ENCODE measurements at regions of chr10 and their contacts with region 1.

Region 1: GRCh38 chr10:33139181-33139646 is 181.2 kb upstream of the ITGB1 start:
- DNase-seq: peak; percentile 42 to 94 (median 76)
- ATAC-seq: peak; percentile 75 to 92 (median 80)
- H3K4me3 ChIP-seq: peak overlapping the region; percentile 23 to 49
- H3K4me3 Mint-ChIP-seq: peak overlapping the region; percentile 38 to 58 (median 48)
- H3K27ac ChIP-seq: peak overlapping the region; percentile 89
- H3K27ac Mint-ChIP-seq: peak overlapping the region; percentile 94
- H3K4me1 ChIP-seq: peaks cover 19 to 93% of the 10 kb centered on the region in 2 experiments
- H3K4me1 Mint-ChIP-seq: peaks cover 64 to 91% (median 89%) of the 10 kb centered on the region in 3 donors
- H3K27me3 ChIP-seq: no peaks in the 10 kb centered on the region
- H3K27me3 Mint-ChIP-seq: no peaks in the 10 kb centered on the region

Region 2: DNA sequence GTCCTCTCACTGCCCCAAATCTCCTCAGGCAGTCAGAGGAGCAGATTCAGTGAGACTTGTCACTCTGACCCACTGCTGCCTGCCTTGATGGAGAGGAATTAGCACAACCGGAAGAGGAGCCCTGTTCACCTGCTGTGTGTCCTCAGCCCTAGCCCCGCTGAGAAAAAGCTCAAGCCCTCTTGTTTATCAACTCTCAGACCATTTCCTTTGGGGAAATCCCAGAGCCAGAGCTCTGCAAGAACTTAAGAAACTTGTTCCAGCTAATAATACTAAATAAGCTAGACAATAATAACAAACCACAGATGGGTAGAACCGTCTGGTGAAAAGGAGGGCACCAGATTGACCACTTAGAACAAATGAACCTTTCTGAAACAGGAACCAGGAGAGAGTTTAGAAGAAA is 143.5 kb before region 1 on chr10:
- CTCF ChIA-PET with region 1: no interaction called
- POLR2A ChIA-PET with region 1: no interaction called
- DNase-seq: no peak
- ATAC-seq: peak in 1 of 4 experiments; percentile 29
- H3K4me3 ChIP-seq: no peak overlapping the region
- H3K4me3 Mint-ChIP-seq: no peak overlapping the region
- H3K27ac ChIP-seq: no peak overlapping the region
- H3K27ac Mint-ChIP-seq: no peak overlapping the region
- H3K4me1 ChIP-seq: peaks cover 0 to 6% of the 10 kb centered on the region in 2 experiments
- H3K4me1 Mint-ChIP-seq: peaks cover 0 to 14% (median 5%) of the 10 kb centered on the region in 3 donors
- H3K27me3 ChIP-seq: no peaks in the 10 kb centered on the region
- H3K27me3 Mint-ChIP-seq: peaks cover 0 to 5% of the 10 kb centered on the region in 2 donors

Region 3: GRCh38 chr10:33115738-33116719 is 23.2 kb before region 1 on chr10:
- CTCF ChIA-PET with region 1: interaction called in 1 of 2 experiments, 9 read pairs
- POLR2A ChIA-PET with region 1: interaction called in 1 of 2 experiments, 12 read pairs
- DNase-seq: peak in 4 of 35 experiments; percentile 29 to 70 (median 31)
- ATAC-seq: peak; percentile 24 to 48 (median 38)
- H3K4me3 ChIP-seq: peak overlapping the region in 1 of 2 donors; percentile 28
- H3K4me3 Mint-ChIP-seq: peak overlapping the region; percentile 45 to 76 (median 64)
- H3K27ac ChIP-seq: peak overlapping the region; percentile 90
- H3K27ac Mint-ChIP-seq: peak overlapping the region; percentile 93 to 100
- H3K4me1 ChIP-seq: peaks cover 14 to 68% of the 10 kb centered on the region in 2 experiments
- H3K4me1 Mint-ChIP-seq: peaks cover 56 to 96% (median 89%) of the 10 kb centered on the region in 3 donors
- H3K27me3 ChIP-seq: no peaks in the 10 kb centered on the region
- H3K27me3 Mint-ChIP-seq: no peaks in the 10 kb centered on the region

Region 4: GRCh38 chr10:33125522-33126517 is 13.4 kb before region 1 on chr10:
- CTCF ChIA-PET with region 1: interaction called, 4 to 12 read pairs
- POLR2A ChIA-PET with region 1: interaction called, 5 to 10 read pairs
- DNase-seq: peak in 27 of 35 experiments; percentile 15 to 74 (median 36)
- ATAC-seq: peak; percentile 82 to 92 (median 91)
- H3K4me3 ChIP-seq: no peak overlapping the region
- H3K4me3 Mint-ChIP-seq: peak overlapping the region; percentile 0 to 65 (median 10)
- H3K27ac ChIP-seq: peak overlapping the region; percentile 90
- H3K27ac Mint-ChIP-seq: peak overlapping the region; percentile 93 to 97
- H3K4me1 ChIP-seq: peaks cover 19 to 84% of the 10 kb centered on the region in 2 experiments
- H3K4me1 Mint-ChIP-seq: peaks cover 69 to 94% (median 82%) of the 10 kb centered on the region in 3 donors
- H3K27me3 ChIP-seq: no peaks in the 10 kb centered on the region
- H3K27me3 Mint-ChIP-seq: no peaks in the 10 kb centered on the region